ENCODE measurements at regions of chrX and their contacts with region 1.

Region 1: DNA sequence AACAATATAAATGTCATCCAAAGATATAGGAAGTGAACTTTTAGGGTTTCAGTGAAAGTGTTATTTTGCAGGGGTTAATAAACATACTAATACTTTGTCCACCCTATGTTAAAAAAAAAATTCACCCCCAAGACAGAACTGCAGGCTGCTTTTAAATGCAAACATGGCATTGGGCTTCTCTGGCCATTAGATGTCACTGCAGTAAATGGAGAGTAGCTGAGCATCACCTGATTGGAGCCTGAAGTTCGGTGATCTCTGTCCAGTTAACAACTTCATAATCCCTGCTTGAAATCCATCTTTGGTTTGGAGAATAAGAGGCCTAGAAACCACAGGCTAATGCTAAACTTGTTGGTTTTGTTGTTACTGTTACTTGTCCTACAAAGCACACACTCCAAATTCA is 18.7 kb downstream of the SLC25A43 start:
- DNase-seq: no peak
- H3K27ac ChIP-seq: no peak overlapping the region
- CTCF ChIP-seq: peak; percentile 32; the same call in 1 of the 2 replicates

Region 2: GRCh38 chrX:119303137-119303536 is 114.7 kb before region 1 on chrX:
- CTCF ChIA-PET with region 1: no interaction called
- POLR2A ChIA-PET with region 1: no interaction called
- DNase-seq: no peak
- H3K27ac ChIP-seq: no peak overlapping the region
- CTCF ChIP-seq: no peak

Region 3: GRCh38 chrX:119402588-119402987 is 15.3 kb before region 1 on chrX:
- CTCF ChIA-PET with region 1: interaction called, 10 read pairs
- POLR2A ChIA-PET with region 1: no interaction called
- DNase-seq: no peak
- H3K27ac ChIP-seq: no peak overlapping the region
- CTCF ChIP-seq: no peak

Region 4: DNA sequence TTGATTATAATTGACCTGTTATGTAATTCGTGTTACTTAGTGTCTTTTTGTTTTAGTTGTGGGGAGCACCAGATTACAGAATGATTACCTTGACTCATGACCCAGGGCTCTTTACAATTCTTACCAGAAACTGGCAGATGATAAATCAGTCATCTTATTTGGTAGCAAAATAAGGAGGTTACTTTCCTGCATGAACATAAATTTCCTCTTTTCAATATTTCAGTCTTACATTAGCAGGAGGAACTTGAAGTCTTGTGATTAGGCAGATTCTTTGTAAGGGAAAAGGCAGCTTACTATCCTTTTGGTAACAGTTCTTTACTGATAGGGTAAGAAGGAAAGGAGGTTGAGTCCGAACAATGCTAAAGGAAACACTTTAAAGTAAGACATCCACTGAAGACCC is 24.4 kb after region 1 on chrX:
- CTCF ChIA-PET with region 1: no interaction called
- POLR2A ChIA-PET with region 1: no interaction called
- DNase-seq: no peak
- H3K27ac ChIP-seq: peak overlapping the region; percentile 90
- CTCF ChIP-seq: no peak

Measured in RWPE1 (cell line).